Head of caudate nucleus (tissue), 42 donors: ENCODE measurements at regions of chr12 and their contacts with region 1.

Region 1: DNA sequence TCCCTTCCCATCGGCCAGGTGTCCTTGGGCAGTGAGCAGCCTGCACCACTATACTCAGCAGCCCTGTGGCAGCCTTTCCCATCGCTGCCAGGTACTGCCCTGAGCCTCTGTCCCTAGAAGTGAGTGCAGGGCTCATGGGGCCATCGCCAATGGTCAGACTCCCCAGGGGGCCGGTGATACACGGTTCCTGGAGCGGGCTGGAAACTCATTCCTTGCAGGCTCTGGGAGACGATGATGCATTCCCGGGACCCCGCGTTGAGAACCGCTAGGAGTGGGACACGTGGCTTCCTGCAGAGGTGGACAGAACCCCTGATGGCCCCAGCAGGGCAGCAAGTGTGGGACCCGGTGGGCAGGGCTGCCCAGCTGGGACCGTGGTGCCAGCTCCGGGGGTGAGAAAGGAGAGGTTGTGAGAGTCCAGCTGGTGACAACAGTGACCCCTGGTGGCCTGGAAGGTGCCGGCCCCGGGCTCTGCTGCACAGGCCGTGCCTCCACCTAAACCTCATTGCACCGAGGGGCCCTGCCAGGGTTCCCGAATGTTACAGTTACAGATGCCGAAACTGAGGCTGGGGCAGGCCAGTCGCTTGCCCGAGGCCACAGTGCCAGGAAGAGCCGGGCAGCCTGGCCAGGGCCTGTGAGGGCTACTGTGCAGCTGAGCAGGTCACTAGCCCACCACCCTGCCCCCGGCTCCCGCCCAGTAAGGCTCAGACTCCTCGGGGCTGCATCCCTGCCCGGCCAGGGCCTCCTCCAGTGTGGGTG is 33.8 kb downstream of the FBRSL1 start:
- DNase-seq: peak; percentile 50 to 95 (median 84)

Region 2: GRCh38 chr12:132236930-132237771 is 286.6 kb before region 1 on chr12:
- intact Hi-C with region 1: no loop called
- DNase-seq: peak in 1 of 42 donors; percentile 10

Region 3: GRCh38 chr12:132414634-132415326 is 109.0 kb before region 1 on chr12:
- intact Hi-C with region 1: loop called (anchors 10 kb)
- DNase-seq: peak; percentile 21 to 90 (median 76)

Region 4: DNA sequence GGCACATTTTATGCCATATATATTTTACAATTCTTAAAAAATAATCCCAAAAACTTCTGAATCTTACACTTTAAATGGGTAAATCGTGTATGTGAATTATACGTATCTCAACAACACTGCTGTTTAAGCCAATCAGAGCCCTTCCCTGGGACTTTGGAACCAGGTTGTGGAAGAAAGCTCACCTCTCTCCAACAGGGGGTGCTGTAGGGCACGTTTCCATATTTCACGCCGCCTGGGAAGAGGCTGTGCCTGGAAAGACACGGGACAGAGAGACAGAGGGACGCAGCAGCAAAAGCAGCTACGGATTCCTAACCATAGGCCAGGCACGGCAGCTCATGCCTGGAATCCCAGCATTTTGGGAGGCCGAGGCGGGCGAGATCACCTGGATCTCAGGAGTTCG is 63.2 kb before region 1 on chr12:
- intact Hi-C with region 1: no loop called
- DNase-seq: no peak

Region 5: DNA sequence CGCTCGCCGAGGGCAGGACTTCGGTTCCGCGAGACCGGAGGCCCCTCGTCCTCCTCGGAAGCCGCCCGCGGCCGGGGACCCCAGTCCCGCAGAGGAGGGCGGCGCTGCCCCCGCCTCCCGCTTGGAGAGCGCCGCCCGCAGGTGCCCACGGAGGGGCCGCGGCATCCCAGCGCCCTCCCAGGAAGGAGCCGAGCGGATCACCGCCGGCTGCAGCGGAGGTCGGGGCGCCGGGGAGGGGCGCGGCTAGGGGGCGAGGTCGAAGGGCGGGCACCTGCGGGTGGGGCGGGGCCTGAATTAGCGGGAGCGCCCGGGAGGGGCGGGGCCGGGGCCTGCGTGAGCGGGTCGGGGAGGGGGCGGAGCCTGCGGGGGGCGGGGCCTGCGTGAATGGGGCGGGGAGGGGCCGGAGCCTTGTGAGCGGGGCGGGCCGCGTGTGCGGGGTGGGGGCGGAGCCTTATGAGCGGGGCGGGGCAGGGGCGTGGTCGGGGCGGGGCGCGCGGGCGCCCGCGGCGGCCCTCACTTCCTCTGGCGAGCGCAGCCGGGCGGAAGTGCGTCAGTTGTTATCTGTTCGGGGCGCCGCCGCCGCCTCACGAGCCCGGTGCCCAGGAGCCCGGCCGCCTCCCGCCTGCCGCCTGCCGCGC is 34.0 kb before region 1 on chr12 and contains the start of gene FBRSL1:
- intact Hi-C with region 1: loop called (anchors 5 kb)
- DNase-seq: peak; percentile 68 to 96 (median 90)